IMR-90 (cell line): ENCODE measurements at regions of chr1 and their contacts with region 1.

Region 1: DNA sequence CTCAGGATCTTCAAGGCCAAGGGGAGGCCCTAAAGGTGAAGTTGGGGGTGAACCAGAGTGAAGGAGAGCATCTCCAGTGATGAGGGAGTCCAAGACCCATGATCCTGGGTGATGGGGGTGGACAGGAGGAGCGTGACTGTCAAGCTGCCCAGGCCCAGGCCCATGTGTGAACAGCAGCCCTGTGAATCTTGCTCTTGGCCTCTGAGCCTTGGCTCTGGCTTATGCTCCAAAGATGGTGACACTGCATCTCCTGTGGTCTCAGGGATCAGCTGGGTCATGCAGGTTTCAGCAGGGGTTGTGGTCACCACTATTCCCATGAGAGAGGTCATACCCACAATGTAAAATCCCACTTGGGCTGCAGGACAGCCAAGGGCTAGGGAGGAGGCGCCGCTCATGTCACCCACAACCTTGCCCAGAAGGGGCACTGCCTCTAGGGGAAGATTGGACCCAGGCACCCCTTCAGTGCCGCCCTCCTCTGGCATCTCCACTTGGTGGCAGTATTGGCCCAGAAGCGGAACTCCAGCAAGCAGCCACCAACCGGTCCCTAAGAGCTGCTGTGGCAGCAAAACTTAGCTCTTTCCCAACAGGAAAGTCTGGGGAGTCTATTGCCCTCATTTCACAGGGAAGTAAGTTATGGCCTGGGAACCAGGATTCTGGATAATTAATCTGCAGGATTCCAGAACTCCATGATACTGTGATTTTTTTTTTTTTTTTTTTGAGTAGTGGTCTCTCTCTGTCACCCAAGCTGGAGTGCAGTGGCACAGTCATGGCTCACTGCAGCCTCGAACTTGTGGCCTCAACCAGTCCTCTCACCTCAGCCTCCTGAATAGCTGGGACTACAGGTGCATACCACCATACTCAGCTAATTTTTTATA is 7.5 kb upstream of the WNT3A start:
- DNase-seq: peak; percentile 57
- ATAC-seq: peak; percentile 98
- H3K4me3 ChIP-seq: no peak overlapping the region
- H3K27ac ChIP-seq: no peak overlapping the region
- H3K4me1 ChIP-seq: no peaks in the 10 kb centered on the region
- H3K27me3 ChIP-seq: peaks cover 28% of the 10 kb centered on the region
- CTCF ChIP-seq: peak; percentile 85
- POLR2A ChIP-seq: no peak
- RAD21 ChIP-seq: peak; percentile 84

Region 2: GRCh38 chr1:228019366-228020083 is 20.2 kb after region 1 on chr1:
- CTCF ChIA-PET with region 1: no interaction called
- POLR2A ChIA-PET with region 1: no interaction called
- dilution Hi-C with region 1: no loop called
- in situ Hi-C with region 1: no loop called
- intact Hi-C with region 1: no loop called
- DNase-seq: no peak
- ATAC-seq: no peak
- H3K4me3 ChIP-seq: no peak overlapping the region
- H3K27ac ChIP-seq: no peak overlapping the region
- H3K4me1 ChIP-seq: peaks cover 5% of the 10 kb centered on the region
- H3K27me3 ChIP-seq: peaks cover 4% of the 10 kb centered on the region; the same call in 1 of the 2 replicates
- CTCF ChIP-seq: no peak
- POLR2A ChIP-seq: no peak
- RAD21 ChIP-seq: no peak

Region 3: GRCh38 chr1:228102791-228103620 is 103.7 kb after region 1 on chr1 and contains the start of gene C1orf35:
- CTCF ChIA-PET with region 1: no interaction called
- POLR2A ChIA-PET with region 1: no interaction called
- dilution Hi-C with region 1: no loop called
- in situ Hi-C with region 1: no loop called
- intact Hi-C with region 1: loop called (anchors 1 kb)
- DNase-seq: peak; percentile 88
- ATAC-seq: peak; percentile 92
- H3K4me3 ChIP-seq: peak within 1 kb of the TSS; percentile 62
- H3K27ac ChIP-seq: peak within 1 kb of the TSS; percentile 49; the same call in 1 of the 2 replicates
- H3K4me1 ChIP-seq: peaks cover 7% of the 10 kb centered on the region; the same call in 1 of the 2 replicates
- H3K27me3 ChIP-seq: no peaks in the 10 kb centered on the region
- CTCF ChIP-seq: no peak
- POLR2A ChIP-seq: no peak
- RAD21 ChIP-seq: no peak
- total RNA-seq, gene C1orf35: 4.3 and 4.7 TPM in 2 replicates

Region 4: DNA sequence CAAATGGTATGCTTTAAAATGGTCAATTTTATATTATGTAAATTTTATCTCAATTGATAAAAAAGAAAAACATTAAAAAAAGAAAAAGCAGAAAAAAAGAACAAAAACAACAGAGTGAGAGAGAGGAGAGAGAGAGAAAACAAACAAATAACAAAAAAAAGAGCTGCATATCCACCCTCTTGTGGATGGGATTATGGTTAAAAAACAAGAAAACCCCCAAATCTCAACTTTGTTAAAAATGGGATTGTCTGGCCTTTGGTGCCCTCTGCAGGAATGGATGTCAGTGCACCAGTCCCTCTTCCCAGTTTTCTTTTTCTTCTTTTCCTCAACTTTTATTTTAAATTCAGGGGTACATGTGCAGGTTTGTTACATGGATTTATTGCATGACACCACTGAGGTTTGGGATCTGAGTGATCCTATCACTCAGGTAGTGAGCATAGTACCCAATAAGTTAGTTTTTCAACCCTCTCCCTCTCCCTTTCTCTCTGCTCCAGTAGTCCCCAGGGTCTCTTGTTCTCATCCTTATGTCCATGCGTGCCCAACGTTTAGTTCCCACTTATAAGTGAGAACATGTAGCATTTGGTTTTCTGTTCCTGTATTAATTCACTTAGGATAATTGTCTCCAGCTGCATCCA is 516.0 kb after region 1 on chr1:
- CTCF ChIA-PET with region 1: no interaction called
- POLR2A ChIA-PET with region 1: no interaction called
- dilution Hi-C with region 1: no loop called
- in situ Hi-C with region 1: no loop called
- intact Hi-C with region 1: loop called (anchors 2 kb)
- DNase-seq: peak; percentile 58
- ATAC-seq: peak; percentile 74
- H3K4me3 ChIP-seq: no peak overlapping the region
- H3K27ac ChIP-seq: no peak overlapping the region
- H3K4me1 ChIP-seq: no peaks in the 10 kb centered on the region
- H3K27me3 ChIP-seq: peaks cover 38% of the 10 kb centered on the region
- CTCF ChIP-seq: peak; percentile 83
- POLR2A ChIP-seq: no peak
- RAD21 ChIP-seq: peak; percentile 89